ENCODE measurements at regions of chr18 and their contacts with region 1.

Region 1: DNA sequence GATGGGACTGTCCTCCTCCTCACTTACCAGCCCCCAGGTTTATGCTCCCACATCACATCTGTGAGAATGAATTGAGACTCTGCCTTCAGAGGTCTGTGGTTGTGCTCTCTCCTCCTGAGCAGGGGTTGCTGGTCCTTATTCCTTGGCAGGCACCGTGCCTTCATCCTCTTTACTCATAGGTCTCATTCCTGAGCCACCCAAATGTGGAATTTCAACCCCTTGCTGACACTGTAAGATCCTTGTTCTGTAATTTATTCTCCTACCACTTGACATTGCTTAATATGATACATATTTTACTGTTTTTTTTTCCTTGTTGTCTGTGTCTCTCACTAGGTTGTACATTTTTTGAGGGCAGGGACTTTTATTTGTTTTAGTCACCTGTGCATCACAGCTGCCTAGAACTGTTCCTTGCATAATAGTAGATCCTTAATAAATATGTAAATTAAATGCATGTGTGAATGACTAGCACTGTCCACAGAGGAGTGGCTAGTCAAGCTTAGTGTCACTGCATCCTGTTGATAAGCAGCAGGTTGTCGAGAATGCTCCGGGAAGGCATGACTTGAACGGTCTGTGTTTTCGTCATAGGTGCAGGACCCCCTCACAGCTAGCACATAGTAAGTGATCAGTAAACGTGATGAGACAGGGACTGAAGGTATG is 180.6 kb downstream of the ZNF407 start:
- DNase-seq: peak; percentile 11
- H3K4me3 Mint-ChIP-seq: no peak overlapping the region
- H3K27ac Mint-ChIP-seq: peak overlapping the region; percentile 43
- H3K4me1 Mint-ChIP-seq: peaks cover 16% of the 10 kb centered on the region
- H3K27me3 Mint-ChIP-seq: no peaks in the 10 kb centered on the region
- CTCF ChIP-seq: no peak

Region 2: DNA sequence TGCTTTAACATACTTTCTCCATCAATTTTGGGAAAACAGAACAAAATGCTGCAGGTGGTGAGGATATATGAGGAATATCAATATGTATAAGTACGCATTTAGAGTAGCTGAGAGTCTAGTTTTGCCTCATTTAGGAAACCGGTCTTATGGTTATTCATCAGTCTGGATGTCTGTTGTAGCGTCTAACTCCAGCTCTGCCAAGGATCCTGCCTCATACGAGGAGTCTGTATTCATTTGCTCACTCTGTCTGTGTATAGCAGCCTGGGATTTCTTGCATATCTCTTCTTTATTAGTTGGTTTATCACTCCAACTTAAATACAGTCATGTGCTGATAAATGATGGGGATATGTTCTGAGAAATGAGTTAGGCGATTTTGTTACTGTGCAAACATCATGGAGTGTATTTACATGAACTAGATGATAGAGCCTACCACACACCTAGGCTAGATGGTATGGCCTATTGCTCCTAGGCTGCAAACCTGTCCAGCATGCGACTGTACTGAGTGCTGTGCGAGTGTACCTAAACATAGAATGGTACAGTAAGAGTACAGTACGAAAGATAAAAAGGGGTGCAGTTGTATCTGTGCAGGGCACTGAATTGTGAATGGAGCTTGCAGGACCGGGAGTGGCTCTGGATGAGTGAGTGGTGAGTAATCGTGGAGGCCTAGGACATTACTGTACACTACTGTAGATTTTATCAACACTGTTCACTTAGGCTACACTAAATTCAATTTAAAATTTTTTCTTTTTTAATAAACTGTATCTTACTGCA is 32.5 kb before region 1 on chr18:
- CTCF ChIA-PET with region 1: interaction called, 4 read pairs
- POLR2A ChIA-PET with region 1: no interaction called
- intact Hi-C with region 1: loop called (anchors 1 kb)
- DNase-seq: peak; percentile 54
- H3K4me3 Mint-ChIP-seq: no peak overlapping the region
- H3K27ac Mint-ChIP-seq: no peak overlapping the region
- H3K4me1 Mint-ChIP-seq: peaks cover 13% of the 10 kb centered on the region
- H3K27me3 Mint-ChIP-seq: no peaks in the 10 kb centered on the region
- CTCF ChIP-seq: no peak

Region 3: DNA sequence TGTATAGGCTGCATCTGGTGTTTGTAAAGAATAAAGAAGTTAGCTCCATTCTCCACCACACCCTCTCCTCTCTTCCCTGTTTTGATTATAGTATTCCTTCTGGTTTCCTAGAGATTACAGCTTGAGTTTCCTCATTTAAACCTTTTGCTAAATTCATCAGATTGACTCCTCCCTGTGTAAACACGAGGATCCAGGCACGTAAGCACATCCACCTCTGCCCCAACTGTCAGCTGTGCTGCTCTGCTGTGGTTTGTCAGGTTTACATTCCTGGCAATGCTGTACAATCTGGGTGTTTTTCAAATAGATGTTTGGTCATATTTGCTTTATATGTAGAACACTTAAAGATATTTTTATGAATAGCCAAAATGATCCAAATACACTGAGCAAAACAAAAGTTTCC is 127.9 kb after region 1 on chr18:
- CTCF ChIA-PET with region 1: no interaction called
- POLR2A ChIA-PET with region 1: no interaction called
- intact Hi-C with region 1: no loop called
- DNase-seq: no peak
- H3K4me3 Mint-ChIP-seq: no peak overlapping the region
- H3K27ac Mint-ChIP-seq: no peak overlapping the region
- H3K4me1 Mint-ChIP-seq: no peaks in the 10 kb centered on the region
- H3K27me3 Mint-ChIP-seq: no peaks in the 10 kb centered on the region
- CTCF ChIP-seq: no peak

Measured in MCF 10A (cell line).